ENCODE measurements at regions of chr3 and their contacts with region 1.

Region 1: DNA sequence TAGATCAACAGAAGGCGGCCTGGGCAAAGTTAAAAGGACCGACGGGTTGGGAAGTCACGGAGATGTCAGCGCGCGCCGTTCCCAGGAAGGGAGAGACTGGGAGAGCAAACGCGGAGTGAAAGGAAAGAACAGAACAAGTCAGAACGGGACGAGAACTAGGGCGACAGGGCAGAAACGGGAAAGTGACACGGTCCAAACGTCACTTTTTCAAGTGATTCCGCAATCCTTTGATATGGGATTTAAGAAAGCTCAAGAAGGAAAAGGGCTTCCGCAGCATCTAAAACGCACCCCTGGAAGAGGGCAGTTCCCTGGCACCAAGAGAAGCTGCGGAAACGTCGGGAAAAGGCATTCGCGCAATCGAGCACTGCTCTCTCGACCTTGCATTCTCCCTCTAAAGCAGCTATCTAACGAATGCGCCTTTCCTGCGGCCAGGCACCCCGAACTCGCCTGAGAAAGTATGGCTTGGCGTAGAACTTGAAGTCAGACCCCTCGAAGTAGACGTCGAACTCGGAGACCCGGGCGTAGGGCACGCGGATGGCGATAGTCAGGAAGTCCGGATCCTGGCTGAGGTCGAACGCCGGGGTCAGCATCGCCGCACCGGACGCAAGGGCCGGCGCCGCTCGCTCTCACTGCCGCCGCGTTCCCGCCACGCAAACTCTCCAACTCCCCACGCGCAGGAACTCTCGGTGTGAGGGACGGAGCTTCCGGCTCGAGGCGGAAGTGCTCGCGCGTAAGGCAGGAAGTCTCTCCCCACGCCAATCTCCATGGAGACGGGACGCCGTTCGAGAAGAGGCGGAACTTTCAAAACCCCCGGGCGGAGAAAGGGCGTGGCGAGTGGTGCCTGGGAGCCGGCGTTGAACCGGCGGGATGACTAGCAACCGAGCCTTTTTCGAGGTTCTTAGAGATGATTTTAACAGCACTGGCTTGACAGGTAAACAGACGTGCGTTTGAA is at the start of gene SHQ1:
- DNase-seq: peak; percentile 98
- ATAC-seq: peak; percentile 90
- H3K4me3 Mint-ChIP-seq: peak within 1 kb of the TSS; percentile 99
- H3K27ac Mint-ChIP-seq: peak within 1 kb of the TSS; percentile 86
- H3K4me1 Mint-ChIP-seq: peaks cover 54% of the 10 kb centered on the region
- H3K27me3 Mint-ChIP-seq: peaks cover 1% of the 10 kb centered on the region
- total RNA-seq, gene SHQ1: 26.4 to 31.3 TPM

Region 2: GRCh38 chr3:71725279-71725991 is 1122.6 kb before region 1 on chr3 and contains the start of gene EIF4E3:
- CTCF ChIA-PET with region 1: interaction called, 5 read pairs
- POLR2A ChIA-PET with region 1: no interaction called
- intact Hi-C with region 1: loop called (anchors 1 to 2 kb)
- DNase-seq: peak; percentile 65
- ATAC-seq: peak; percentile 34
- H3K4me3 Mint-ChIP-seq: peak within 1 kb of the TSS; percentile 91
- H3K27ac Mint-ChIP-seq: peak within 1 kb of the TSS; percentile 95
- H3K4me1 Mint-ChIP-seq: peaks cover 67% of the 10 kb centered on the region
- H3K27me3 Mint-ChIP-seq: no peaks in the 10 kb centered on the region
- total RNA-seq, gene EIF4E3: 28.7 to 29.7 TPM

Region 3: DNA sequence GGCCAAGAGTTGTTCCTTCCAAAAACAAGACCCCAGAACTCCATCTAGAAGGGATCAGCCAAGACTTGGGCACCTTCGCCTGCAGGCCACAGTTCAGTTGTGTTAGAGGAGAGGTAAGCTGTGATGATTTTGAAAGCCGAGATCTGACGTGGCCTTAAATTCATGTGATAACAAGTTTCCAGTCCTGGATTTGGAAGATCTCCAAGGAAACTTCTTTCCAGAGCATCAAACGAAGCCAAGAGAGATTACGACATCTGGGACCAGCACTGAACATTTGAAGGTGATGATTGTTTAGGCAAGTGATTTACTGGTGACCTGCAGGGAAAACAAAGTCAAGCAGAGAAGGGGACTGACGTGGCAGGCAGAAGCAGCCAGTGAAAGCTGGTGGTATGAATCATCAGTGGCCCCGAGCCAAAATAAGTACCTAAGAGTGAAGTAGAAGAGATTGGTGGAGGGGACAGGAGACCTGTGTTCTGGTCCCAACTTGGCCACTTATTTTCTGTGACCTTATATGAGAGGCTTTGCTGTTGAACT is 724.1 kb before region 1 on chr3:
- CTCF ChIA-PET with region 1: no interaction called
- POLR2A ChIA-PET with region 1: no interaction called
- intact Hi-C with region 1: no loop called
- DNase-seq: peak; percentile 63
- ATAC-seq: peak; percentile 79
- H3K4me3 Mint-ChIP-seq: no peak overlapping the region
- H3K27ac Mint-ChIP-seq: no peak overlapping the region
- H3K4me1 Mint-ChIP-seq: peaks cover 9% of the 10 kb centered on the region
- H3K27me3 Mint-ChIP-seq: peaks cover 3% of the 10 kb centered on the region

Region 4: GRCh38 chr3:72418244-72418643 is 429.8 kb before region 1 on chr3:
- CTCF ChIA-PET with region 1: no interaction called
- POLR2A ChIA-PET with region 1: no interaction called
- intact Hi-C with region 1: loop called in 1 of 2 experiments (anchors 1 kb)
- DNase-seq: no peak
- ATAC-seq: peak; percentile 73
- H3K4me3 Mint-ChIP-seq: no peak overlapping the region
- H3K27ac Mint-ChIP-seq: no peak overlapping the region
- H3K4me1 Mint-ChIP-seq: peaks cover 72% of the 10 kb centered on the region
- H3K27me3 Mint-ChIP-seq: no peaks in the 10 kb centered on the region

Region 5: DNA sequence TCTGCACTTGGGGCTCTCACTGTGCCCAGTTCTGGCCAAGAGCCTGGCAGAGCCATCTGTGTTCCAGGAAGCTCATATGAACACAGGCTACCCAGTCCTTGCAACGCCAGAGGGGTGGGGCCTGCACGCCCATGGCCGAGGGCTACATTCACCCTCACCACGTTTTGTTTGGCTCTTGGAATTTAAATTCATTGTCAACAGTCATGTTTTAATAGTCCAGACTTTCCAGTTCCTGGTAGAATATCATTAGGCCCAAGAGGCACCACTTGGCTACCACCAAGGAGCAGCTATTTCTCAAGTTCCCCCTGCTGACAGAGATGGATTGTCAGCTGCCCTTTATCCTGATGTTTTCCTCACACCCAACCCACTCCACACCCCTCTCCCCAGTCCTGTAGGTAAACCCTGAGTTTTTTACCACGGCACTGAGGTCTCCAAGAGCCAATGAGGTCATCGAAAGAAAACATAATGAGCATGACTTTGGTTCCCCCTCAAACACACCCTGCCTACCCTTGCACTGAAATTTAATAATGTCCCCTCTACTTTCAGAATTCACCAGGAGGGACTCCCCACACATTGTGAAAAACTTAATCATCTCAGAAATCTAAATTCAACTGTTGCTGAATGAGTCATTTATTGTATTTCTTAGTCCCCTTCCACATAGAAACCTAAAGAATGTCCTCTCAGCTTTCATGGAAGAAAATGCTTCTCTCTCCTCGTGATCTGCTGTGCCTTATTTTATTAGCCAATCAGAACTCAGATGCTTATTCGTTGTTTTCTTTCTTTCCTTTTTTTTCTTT is 124.9 kb before region 1 on chr3:
- CTCF ChIA-PET with region 1: no interaction called
- POLR2A ChIA-PET with region 1: no interaction called
- intact Hi-C with region 1: loop called in 1 of 2 experiments (anchors 1 kb)
- DNase-seq: peak; percentile 16
- ATAC-seq: peak; percentile 95
- H3K4me3 Mint-ChIP-seq: no peak overlapping the region
- H3K27ac Mint-ChIP-seq: peak overlapping the region; percentile 61
- H3K4me1 Mint-ChIP-seq: peaks cover 19% of the 10 kb centered on the region
- H3K27me3 Mint-ChIP-seq: peaks cover 5% of the 10 kb centered on the region

Region 6: DNA sequence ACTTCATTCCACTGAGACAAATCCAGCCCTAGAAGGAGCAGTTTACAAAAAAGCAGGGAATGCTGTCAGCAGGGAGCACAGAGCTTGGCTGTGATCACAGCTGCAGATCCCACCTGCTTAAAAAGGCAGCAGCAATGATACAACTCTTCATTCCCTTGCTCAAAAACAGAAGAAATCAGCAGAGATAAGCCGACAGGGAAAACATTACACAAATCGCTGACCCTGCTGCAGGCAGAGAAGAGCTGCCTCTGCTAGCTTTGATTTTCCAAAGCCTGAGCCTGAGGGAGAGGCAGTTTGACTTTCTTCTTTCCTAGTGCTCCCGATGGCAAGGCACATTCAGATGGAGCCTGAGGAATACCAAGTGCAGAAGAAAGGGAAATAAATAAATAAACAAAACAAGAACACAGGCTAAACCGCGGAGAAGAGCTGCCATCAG is 80.0 kb before region 1 on chr3:
- CTCF ChIA-PET with region 1: no interaction called
- POLR2A ChIA-PET with region 1: no interaction called
- intact Hi-C with region 1: no loop called
- DNase-seq: no peak
- ATAC-seq: no peak
- H3K4me3 Mint-ChIP-seq: no peak overlapping the region
- H3K27ac Mint-ChIP-seq: no peak overlapping the region
- H3K4me1 Mint-ChIP-seq: peaks cover 14% of the 10 kb centered on the region
- H3K27me3 Mint-ChIP-seq: no peaks in the 10 kb centered on the region

Region 7: GRCh38 chr3:72872183-72872582 is 24.2 kb after region 1 on chr3:
- CTCF ChIA-PET with region 1: interaction called, 12 read pairs
- POLR2A ChIA-PET with region 1: no interaction called
- intact Hi-C with region 1: no loop called
- DNase-seq: no peak
- ATAC-seq: no peak
- H3K4me3 Mint-ChIP-seq: no peak overlapping the region
- H3K27ac Mint-ChIP-seq: no peak overlapping the region
- H3K4me1 Mint-ChIP-seq: no peaks in the 10 kb centered on the region
- H3K27me3 Mint-ChIP-seq: peaks cover 9% of the 10 kb centered on the region

Region 8: GRCh38 chr3:73056014-73056844 is 208.2 kb after region 1 on chr3:
- CTCF ChIA-PET with region 1: interaction called, 38 read pairs
- POLR2A ChIA-PET with region 1: no interaction called
- intact Hi-C with region 1: loop called (anchors 1 to 10 kb)
- DNase-seq: no peak
- ATAC-seq: no peak
- H3K4me3 Mint-ChIP-seq: no peak overlapping the region
- H3K27ac Mint-ChIP-seq: peak overlapping the region; percentile 19
- H3K4me1 Mint-ChIP-seq: peaks cover 28% of the 10 kb centered on the region
- H3K27me3 Mint-ChIP-seq: no peaks in the 10 kb centered on the region